ENCODE measurements at regions of chr10 and their contacts with region 1.

Region 1: DNA sequence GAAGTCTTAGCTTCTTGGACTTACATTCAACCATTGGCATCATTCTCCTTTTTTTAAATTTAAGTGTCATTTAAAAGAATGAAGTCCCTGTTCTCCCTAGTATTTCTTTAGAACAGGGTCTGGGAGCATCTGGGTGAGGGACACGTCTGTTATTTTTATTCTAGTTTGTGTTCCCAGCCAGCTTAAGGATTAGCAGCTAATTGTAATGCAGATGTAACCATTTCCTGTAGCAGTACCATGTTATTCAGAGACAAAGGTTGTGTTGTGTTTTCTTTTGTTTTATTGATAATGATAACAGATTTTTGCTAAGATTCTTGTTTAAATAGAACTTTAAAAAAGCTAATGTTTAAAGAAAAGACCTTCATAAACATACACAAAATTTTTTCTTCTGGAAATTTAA is 34.3 kb downstream of the BMS1 start:
- DNase-seq: no peak
- ATAC-seq: no peak
- H3K4me3 Mint-ChIP-seq: peak overlapping the region; percentile 35
- H3K27ac Mint-ChIP-seq: peak overlapping the region; percentile 98
- H3K4me1 Mint-ChIP-seq: peaks cover 69% of the 10 kb centered on the region
- H3K27me3 Mint-ChIP-seq: peaks cover 12% of the 10 kb centered on the region
- CTCF ChIP-seq: no peak

Region 2: GRCh38 chr10:42827201-42827600 is 10.3 kb after region 1 on chr10:
- CTCF ChIA-PET with region 1: interaction called, 11 read pairs
- POLR2A ChIA-PET with region 1: no interaction called
- DNase-seq: peak; percentile 52
- ATAC-seq: peak; percentile 98
- H3K4me3 Mint-ChIP-seq: no peak overlapping the region
- H3K27ac Mint-ChIP-seq: peak overlapping the region; percentile 83; the same call in 1 of the 2 replicates
- H3K4me1 Mint-ChIP-seq: peaks cover 32% of the 10 kb centered on the region
- H3K27me3 Mint-ChIP-seq: no peaks in the 10 kb centered on the region
- CTCF ChIP-seq: no peak